ENCODE measurements at regions of chr10 and their contacts with region 1.

Region 1: GRCh38 chr10:96089670-96090462 is 40.2 kb upstream of the ZNF518A start:
- DNase-seq: peak; percentile 95
- ATAC-seq: peak; percentile 91
- H3K4me3 Mint-ChIP-seq: peak overlapping the region; percentile 92
- H3K27ac Mint-ChIP-seq: peak overlapping the region; percentile 99
- H3K4me1 Mint-ChIP-seq: peaks cover 6% of the 10 kb centered on the region
- H3K27me3 Mint-ChIP-seq: peaks cover 15% of the 10 kb centered on the region

Region 2: GRCh38 chr10:95907456-95908253 is 182.2 kb before region 1 on chr10 and contains the start of gene CC2D2B:
- CTCF ChIA-PET with region 1: no interaction called
- POLR2A ChIA-PET with region 1: no interaction called
- intact Hi-C with region 1: loop called in 1 of 2 experiments (anchors 1 kb)
- DNase-seq: peak; percentile 85
- ATAC-seq: peak; percentile 94
- H3K4me3 Mint-ChIP-seq: peak within 1 kb of the TSS; percentile 88
- H3K27ac Mint-ChIP-seq: peak within 1 kb of the TSS; percentile 96
- H3K4me1 Mint-ChIP-seq: peaks cover 9% of the 10 kb centered on the region
- H3K27me3 Mint-ChIP-seq: peaks cover 2% of the 10 kb centered on the region
- total RNA-seq, gene CC2D2B: 0.23 TPM in 1 of 2 experiments, not detected in the other

Region 3: GRCh38 chr10:96043033-96043932 is 46.6 kb before region 1 on chr10 and contains the start of gene CCNJ:
- CTCF ChIA-PET with region 1: no interaction called
- POLR2A ChIA-PET with region 1: no interaction called
- intact Hi-C with region 1: loop called (anchors 1 kb)
- DNase-seq: peak; percentile 90
- ATAC-seq: peak; percentile 93
- H3K4me3 Mint-ChIP-seq: peak within 1 kb of the TSS; percentile 93
- H3K27ac Mint-ChIP-seq: peak within 1 kb of the TSS; percentile 79
- H3K4me1 Mint-ChIP-seq: peaks cover 39% of the 10 kb centered on the region
- H3K27me3 Mint-ChIP-seq: no peaks in the 10 kb centered on the region
- total RNA-seq, gene CCNJ: 4.4 to 4.5 TPM

Region 4: GRCh38 chr10:96061232-96061631 is 28.6 kb before region 1 on chr10:
- CTCF ChIA-PET with region 1: interaction called, 4 read pairs
- POLR2A ChIA-PET with region 1: no interaction called
- intact Hi-C with region 1: loop called in 1 of 2 experiments (anchors 1 kb)
- DNase-seq: no peak
- ATAC-seq: no peak
- H3K4me3 Mint-ChIP-seq: no peak overlapping the region
- H3K27ac Mint-ChIP-seq: no peak overlapping the region
- H3K4me1 Mint-ChIP-seq: peaks cover 21% of the 10 kb centered on the region
- H3K27me3 Mint-ChIP-seq: no peaks in the 10 kb centered on the region

Region 5: DNA sequence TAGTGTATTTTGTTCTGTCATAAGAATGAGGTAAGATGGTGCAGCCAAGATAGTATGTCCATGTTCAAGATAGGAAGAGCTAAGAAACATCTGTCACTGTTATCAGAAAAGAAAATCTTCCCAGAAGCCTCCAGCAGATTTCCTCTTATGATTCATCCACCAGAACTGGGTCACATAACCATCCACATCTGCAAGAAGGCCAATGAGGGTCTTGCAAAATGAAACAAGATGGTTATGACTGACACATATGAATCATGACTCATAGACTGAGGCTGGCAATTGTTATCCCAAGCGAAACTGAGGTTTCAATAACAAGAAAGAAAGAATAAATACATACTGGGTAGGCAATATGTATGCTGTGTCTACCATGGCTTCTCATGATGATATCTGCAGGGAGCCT is 16.1 kb before region 1 on chr10:
- CTCF ChIA-PET with region 1: interaction called, 8 read pairs
- POLR2A ChIA-PET with region 1: interaction called, 5 read pairs
- intact Hi-C with region 1: loop called in 1 of 2 experiments (anchors 1 kb)
- DNase-seq: peak; percentile 15
- ATAC-seq: peak; percentile 99
- H3K4me3 Mint-ChIP-seq: no peak overlapping the region
- H3K27ac Mint-ChIP-seq: peak overlapping the region; percentile 75
- H3K4me1 Mint-ChIP-seq: peaks cover 20% of the 10 kb centered on the region
- H3K27me3 Mint-ChIP-seq: no peaks in the 10 kb centered on the region

Region 6: GRCh38 chr10:96124230-96125141 is 34.6 kb after region 1 on chr10:
- CTCF ChIA-PET with region 1: interaction called, 13 read pairs
- POLR2A ChIA-PET with region 1: interaction called, 49 read pairs
- intact Hi-C with region 1: no loop called
- DNase-seq: no peak
- ATAC-seq: no peak
- H3K4me3 Mint-ChIP-seq: no peak overlapping the region
- H3K27ac Mint-ChIP-seq: no peak overlapping the region
- H3K4me1 Mint-ChIP-seq: peaks cover 4% of the 10 kb centered on the region
- H3K27me3 Mint-ChIP-seq: peaks cover 52% of the 10 kb centered on the region

Region 7: GRCh38 chr10:96129387-96130325 is 39.8 kb after region 1 on chr10 and contains the start of gene ZNF518A:
- CTCF ChIA-PET with region 1: interaction called, 13 read pairs
- POLR2A ChIA-PET with region 1: interaction called, 49 read pairs
- intact Hi-C with region 1: loop called (anchors 1 kb)
- DNase-seq: peak; percentile 93
- ATAC-seq: peak; percentile 88
- H3K4me3 Mint-ChIP-seq: peak within 1 kb of the TSS; percentile 83
- H3K27ac Mint-ChIP-seq: peak within 1 kb of the TSS; percentile 99
- H3K4me1 Mint-ChIP-seq: peaks cover 20% of the 10 kb centered on the region
- H3K27me3 Mint-ChIP-seq: peaks cover 26% of the 10 kb centered on the region
- total RNA-seq, gene ZNF518A: 13.9 to 14.2 TPM